ENCODE measurements at regions of chr22 and their contacts with region 1.

Region 1: DNA sequence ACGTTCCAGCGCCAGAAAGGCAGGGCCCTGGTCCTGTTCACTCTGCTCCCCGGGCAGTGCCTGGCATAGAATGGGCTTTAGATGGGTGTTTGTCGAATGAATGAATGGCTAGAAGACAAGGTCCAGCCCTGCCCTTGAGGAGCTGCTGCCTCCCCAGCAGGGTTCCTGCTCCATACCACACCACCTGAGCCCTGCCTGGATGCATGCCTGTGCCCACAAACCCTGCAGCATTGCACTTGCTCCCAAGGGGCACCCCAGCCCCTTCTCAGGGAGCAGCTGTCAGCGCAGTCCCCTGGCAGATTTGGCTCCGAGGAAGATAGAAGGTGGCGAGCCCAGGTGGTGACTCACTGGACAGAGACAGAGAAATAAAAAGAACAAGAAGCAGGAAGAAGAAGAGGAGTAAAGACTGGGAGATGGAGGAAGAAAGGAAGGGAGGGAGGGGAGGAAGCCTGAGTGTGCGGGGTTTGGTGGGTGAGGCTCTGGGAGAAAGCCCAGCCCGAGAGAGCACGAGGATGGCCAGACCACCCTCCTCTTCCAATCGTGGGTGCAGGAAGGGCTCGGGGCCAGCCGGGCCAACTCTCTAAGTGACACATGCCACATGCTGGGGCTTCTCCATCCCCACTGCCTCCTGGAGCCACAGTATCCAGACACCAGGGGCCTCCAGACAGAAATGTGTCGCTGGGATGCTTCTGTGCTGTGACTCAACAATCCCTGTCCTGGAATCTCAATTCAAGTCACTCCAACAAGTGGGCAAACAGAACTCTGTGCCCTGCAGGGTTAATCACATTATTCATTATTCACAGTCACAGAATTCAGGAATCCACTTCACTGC is 1474.3 kb downstream of the BRD1 start:
- DNase-seq: peak in 2 of 10 donors; percentile 6 to 11
- H3K4me3 ChIP-seq: no peak overlapping the region
- H3K27ac ChIP-seq: no peak overlapping the region
- H3K27me3 ChIP-seq: peaks cover 0 to 29% (median 0%) of the 10 kb centered on the region in 45 donors
- CTCF ChIP-seq: no peak

Region 2: GRCh38 chr22:48320683-48321451 is 32.5 kb before region 1 on chr22:
- intact Hi-C with region 1: no loop called
- DNase-seq: peak in 5 of 10 donors; percentile 11 to 33 (median 27)
- H3K4me3 ChIP-seq: no peak overlapping the region
- H3K27ac ChIP-seq: no peak overlapping the region
- H3K27me3 ChIP-seq: peaks cover 0 to 11% (median 0%) of the 10 kb centered on the region in 45 donors
- CTCF ChIP-seq: no peak

Region 3: DNA sequence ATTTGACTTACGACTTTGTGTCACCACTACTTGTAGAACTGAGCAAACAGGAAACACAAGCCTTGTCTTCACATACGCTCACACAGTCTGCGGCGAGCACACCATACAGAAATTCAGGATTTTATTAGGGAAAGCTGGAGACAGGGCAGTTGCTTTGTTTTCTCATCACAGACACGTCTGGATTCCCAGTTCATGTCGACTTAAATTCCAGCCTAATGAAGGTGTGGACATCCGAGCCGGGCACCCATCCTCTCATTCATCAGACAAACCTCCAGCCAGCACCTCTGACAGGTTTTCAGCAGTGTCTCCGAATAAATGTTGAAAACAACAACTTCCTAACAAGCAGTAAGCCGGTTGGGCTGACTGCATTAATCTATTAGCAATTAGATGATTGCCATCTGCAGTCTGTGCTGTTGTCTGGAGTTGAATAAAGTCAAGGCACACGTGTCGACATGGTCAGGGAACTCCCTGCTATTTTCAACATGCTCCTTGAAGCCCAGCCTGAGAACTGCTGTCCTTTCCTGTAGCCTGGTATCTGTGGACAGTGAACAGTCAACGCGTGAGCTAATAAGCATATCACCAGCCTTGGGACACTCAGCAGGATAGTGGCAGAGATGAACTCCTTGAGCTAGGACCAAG is 63.4 kb after region 1 on chr22:
- intact Hi-C with region 1: loop called in 1 of 2 experiments (anchors 10 kb)
- DNase-seq: peak in 2 of 10 donors; percentile 3 to 13
- H3K4me3 ChIP-seq: no peak overlapping the region
- H3K27ac ChIP-seq: no peak overlapping the region
- H3K27me3 ChIP-seq: peaks cover 0 to 13% (median 0%) of the 10 kb centered on the region in 45 donors
- CTCF ChIP-seq: no peak

Measured in dorsolateral prefrontal cortex (tissue), 120 donors.